Panc1 (cell line): ENCODE measurements at regions of chr10 and their contacts with region 1.

Region 1: GRCh38 chr10:93873427-93874115 is 20.2 kb upstream of the SLC35G1 start:
- DNase-seq: no peak
- ATAC-seq: no peak
- H3K4me3 ChIP-seq: no peak overlapping the region
- H3K27ac ChIP-seq: peak overlapping the region; percentile 2; the same call in 1 of the 2 replicates
- H3K4me1 ChIP-seq: no peaks in the 10 kb centered on the region
- H3K27me3 ChIP-seq: no peaks in the 10 kb centered on the region; the same call in 1 of the 2 replicates
- CTCF ChIP-seq: no peak

Region 2: GRCh38 chr10:93566435-93567276 is 306.9 kb before region 1 on chr10 and contains the start of gene FFAR4:
- CTCF ChIA-PET with region 1: no interaction called
- POLR2A ChIA-PET with region 1: no interaction called
- in situ Hi-C with region 1: no loop called
- intact Hi-C with region 1: no loop called
- DNase-seq: no peak
- ATAC-seq: peak; percentile 76
- H3K4me3 ChIP-seq: peak within 1 kb of the TSS; percentile 39 to 55
- H3K27ac ChIP-seq: no peak within 1 kb of the TSS
- H3K4me1 ChIP-seq: peaks cover 10% of the 10 kb centered on the region
- H3K27me3 ChIP-seq: peaks cover 34% of the 10 kb centered on the region
- CTCF ChIP-seq: no peak
- total RNA-seq, gene FFAR4: 0.92 TPM

Region 3: DNA sequence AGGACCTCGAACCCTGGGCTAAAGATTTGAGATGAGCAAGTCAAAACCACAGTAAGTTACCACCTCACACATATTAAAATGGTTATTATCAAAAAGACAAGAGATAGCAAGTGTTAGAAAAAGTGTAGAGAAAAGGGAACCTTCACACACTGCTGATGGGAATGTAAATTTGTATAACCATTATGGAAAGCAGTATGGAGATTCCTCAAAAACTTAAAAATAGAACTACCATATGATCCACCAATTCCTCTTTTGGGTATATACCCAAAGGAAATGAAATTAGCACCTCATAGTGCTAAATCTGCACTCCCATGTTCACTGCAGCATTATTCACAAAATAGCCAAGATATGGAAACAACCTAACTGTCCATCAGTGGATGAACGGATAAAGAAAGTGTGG is 150.4 kb before region 1 on chr10:
- CTCF ChIA-PET with region 1: no interaction called
- POLR2A ChIA-PET with region 1: interaction called, 10 read pairs
- in situ Hi-C with region 1: no loop called
- intact Hi-C with region 1: no loop called
- DNase-seq: no peak
- ATAC-seq: no peak
- H3K4me3 ChIP-seq: no peak overlapping the region
- H3K27ac ChIP-seq: no peak overlapping the region
- H3K4me1 ChIP-seq: no peaks in the 10 kb centered on the region
- H3K27me3 ChIP-seq: peaks cover 23% of the 10 kb centered on the region
- CTCF ChIP-seq: no peak

Region 4: DNA sequence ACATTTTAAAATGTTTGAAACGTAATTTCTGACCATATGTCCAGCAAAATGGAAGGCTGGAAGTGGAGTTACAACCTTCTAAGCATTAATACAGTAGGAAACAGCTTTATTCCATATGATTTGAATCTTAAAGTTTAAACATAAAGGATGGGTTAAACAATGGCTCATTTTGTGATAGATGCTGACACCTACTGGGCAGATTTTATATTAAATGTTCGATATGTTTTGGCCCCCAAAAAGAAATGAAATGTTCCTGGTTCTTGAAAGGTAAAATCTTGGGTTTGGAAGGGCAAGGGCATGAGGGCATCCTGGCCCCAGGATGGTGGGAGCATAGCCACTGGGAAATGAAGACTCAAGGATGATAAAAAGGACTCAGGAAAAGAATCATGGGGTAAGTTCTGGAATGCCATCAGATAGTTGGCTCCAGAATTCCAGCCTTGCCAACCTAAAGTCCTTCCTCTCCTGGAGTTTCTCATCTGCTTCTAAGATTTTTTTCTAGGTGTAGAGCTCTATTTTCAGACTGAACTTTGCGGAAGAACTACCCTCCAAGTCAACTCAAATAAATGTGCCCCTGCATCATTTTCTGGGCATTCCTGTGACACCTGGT is 14.4 kb before region 1 on chr10:
- CTCF ChIA-PET with region 1: interaction called, 4 read pairs
- POLR2A ChIA-PET with region 1: interaction called, 11 read pairs
- in situ Hi-C with region 1: no loop called
- intact Hi-C with region 1: no loop called
- DNase-seq: no peak
- ATAC-seq: 0 out of 2 replicates have a peak, but pooled peaks have one; percentile 62
- H3K4me3 ChIP-seq: no peak overlapping the region
- H3K27ac ChIP-seq: no peak overlapping the region
- H3K4me1 ChIP-seq: no peaks in the 10 kb centered on the region
- H3K27me3 ChIP-seq: no peaks in the 10 kb centered on the region; the same call in 1 of the 2 replicates
- CTCF ChIP-seq: peak; percentile 76